Naive thymus-derived CD4-positive, alpha-beta T cell (primary cell): ENCODE measurements at regions of chr6 and their contacts with region 1.

Region 1: DNA sequence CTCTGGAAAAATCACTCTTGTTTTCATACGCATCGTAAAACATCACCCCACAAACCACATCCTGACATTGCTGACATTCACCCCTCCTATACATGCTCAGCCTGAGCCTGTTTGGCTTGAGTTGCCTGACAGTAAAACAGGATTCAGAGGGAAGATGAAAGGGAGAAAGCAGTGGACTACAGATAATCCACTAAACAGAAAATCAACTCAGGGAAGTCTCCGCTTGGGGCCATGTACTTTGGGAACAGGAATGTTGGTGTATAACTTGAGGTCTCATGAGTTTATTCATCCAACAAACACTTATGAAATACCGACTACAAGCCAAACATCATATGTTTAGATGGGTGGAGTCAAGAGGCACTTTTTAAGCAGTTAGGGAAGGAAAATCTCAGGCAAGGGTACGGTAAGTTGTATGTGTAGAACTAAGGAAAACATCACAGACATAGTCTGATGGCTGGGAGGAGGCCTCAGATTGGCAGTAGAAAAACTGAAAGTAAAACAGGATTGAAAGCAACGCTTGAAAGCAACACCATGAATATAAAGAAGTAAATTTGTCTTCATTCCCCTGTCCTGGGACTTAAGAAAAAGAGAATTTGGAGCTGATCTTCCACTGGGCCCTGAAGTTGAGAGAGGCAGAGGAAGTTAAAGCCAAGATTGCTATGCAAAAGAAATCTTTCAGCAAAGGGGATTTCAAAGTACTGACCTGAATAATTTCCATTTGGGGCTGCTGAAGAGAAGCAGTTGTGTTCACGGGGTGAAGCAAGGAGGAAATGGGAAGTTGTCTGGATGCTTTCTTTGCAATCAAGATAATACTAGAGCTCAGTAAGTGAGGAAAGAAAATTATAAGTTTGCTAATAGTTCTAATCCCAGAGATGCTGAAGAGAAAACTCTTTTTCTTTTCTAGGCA is 28.8 kb downstream of the PDE7B start:
- DNase-seq: peak in 8 of 9 donors; percentile 52 to 86 (median 79)
- ATAC-seq: peak; percentile 95
- H3K4me3 ChIP-seq: peak overlapping the region; percentile 40
- H3K4me3 Mint-ChIP-seq: peak overlapping the region; percentile 81 to 94 (median 86)
- H3K27ac ChIP-seq: peak overlapping the region; percentile 90
- H3K27ac Mint-ChIP-seq: peak overlapping the region; percentile 94 to 99 (median 98)
- H3K4me1 ChIP-seq: peaks cover 16 to 37% of the 10 kb centered on the region in 2 donors
- H3K4me1 Mint-ChIP-seq: peaks cover 31 to 90% (median 79%) of the 10 kb centered on the region in 7 donors
- H3K27me3 ChIP-seq: no peaks in the 10 kb centered on the region
- H3K27me3 Mint-ChIP-seq: no peaks in the 10 kb centered on the region

Region 2: GRCh38 chr6:135624402-135625295 is 255.7 kb before region 1 on chr6:
- CTCF ChIA-PET with region 1: no interaction called
- POLR2A ChIA-PET with region 1: no interaction called
- intact Hi-C with region 1: loop called in 1 of 2 experiments (anchors 1 kb)
- DNase-seq: peak in 3 of 9 donors; percentile 1 to 9 (median 7)
- ATAC-seq: no peak
- H3K4me3 ChIP-seq: no peak overlapping the region
- H3K4me3 Mint-ChIP-seq: peak overlapping the region in 2 of 10 donors; percentile 2 to 17
- H3K27ac ChIP-seq: no peak overlapping the region
- H3K27ac Mint-ChIP-seq: peak overlapping the region in 3 of 9 donors; percentile 13 to 91 (median 47)
- H3K4me1 ChIP-seq: no peaks in the 10 kb centered on the region
- H3K4me1 Mint-ChIP-seq: peaks cover 5 to 51% (median 16%) of the 10 kb centered on the region in 7 donors
- H3K27me3 ChIP-seq: no peaks in the 10 kb centered on the region
- H3K27me3 Mint-ChIP-seq: no peaks in the 10 kb centered on the region

Region 3: DNA sequence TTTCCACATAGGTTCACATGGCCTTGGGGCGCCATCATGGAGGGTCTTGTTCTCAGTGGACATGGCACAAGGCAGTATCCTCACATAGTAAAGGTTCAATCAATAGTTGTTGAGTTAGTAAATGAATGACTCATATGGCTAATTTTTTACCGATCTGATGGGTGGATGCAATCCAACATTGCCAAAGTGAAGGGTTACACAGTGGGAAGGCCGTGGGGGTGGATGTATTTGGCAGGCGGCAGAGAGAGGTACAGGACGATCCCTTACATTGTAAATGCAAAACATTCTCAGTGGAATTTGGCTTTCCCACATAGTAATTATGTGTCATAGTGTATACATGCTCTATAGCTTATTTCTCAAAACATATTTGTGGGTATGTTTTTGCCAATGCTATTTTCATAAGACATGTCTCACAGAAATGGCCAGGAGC is 49.9 kb before region 1 on chr6:
- CTCF ChIA-PET with region 1: no interaction called
- POLR2A ChIA-PET with region 1: interaction called, 3 read pairs
- intact Hi-C with region 1: loop called in 1 of 2 experiments (anchors 10 kb)
- DNase-seq: no peak
- ATAC-seq: no peak
- H3K4me3 ChIP-seq: no peak overlapping the region
- H3K4me3 Mint-ChIP-seq: no peak overlapping the region
- H3K27ac ChIP-seq: no peak overlapping the region
- H3K27ac Mint-ChIP-seq: no peak overlapping the region
- H3K4me1 ChIP-seq: no peaks in the 10 kb centered on the region
- H3K4me1 Mint-ChIP-seq: peaks cover 0 to 5% (median 0%) of the 10 kb centered on the region in 7 donors
- H3K27me3 ChIP-seq: no peaks in the 10 kb centered on the region
- H3K27me3 Mint-ChIP-seq: peaks cover 0 to 8% (median 3%) of the 10 kb centered on the region in 5 donors

Region 4: GRCh38 chr6:135851442-135852271 is 28.7 kb before region 1 on chr6 and contains the start of gene PDE7B:
- CTCF ChIA-PET with region 1: interaction called, 5 read pairs
- POLR2A ChIA-PET with region 1: interaction called, 12 read pairs
- intact Hi-C with region 1: loop called (anchors 1 kb)
- DNase-seq: peak; percentile 18 to 73 (median 46)
- ATAC-seq: peak; percentile 94
- H3K4me3 ChIP-seq: peak within 1 kb of the TSS; percentile 53
- H3K4me3 Mint-ChIP-seq: peak within 1 kb of the TSS in 9 of 10 donors; percentile 71 to 90 (median 87)
- H3K27ac ChIP-seq: peak within 1 kb of the TSS; percentile 75
- H3K27ac Mint-ChIP-seq: peak within 1 kb of the TSS in 6 of 9 donors; percentile 78 to 96 (median 88)
- H3K4me1 ChIP-seq: peaks cover 0 to 23% of the 10 kb centered on the region in 2 donors
- H3K4me1 Mint-ChIP-seq: peaks cover 5 to 47% (median 36%) of the 10 kb centered on the region in 7 donors
- H3K27me3 ChIP-seq: no peaks in the 10 kb centered on the region
- H3K27me3 Mint-ChIP-seq: no peaks in the 10 kb centered on the region
- total RNA-seq, gene PDE7B: 0.37 to 18.7 (median 1.7) TPM

Region 5: GRCh38 chr6:135861189-135861588 is 19.1 kb before region 1 on chr6:
- CTCF ChIA-PET with region 1: no interaction called
- POLR2A ChIA-PET with region 1: interaction called, 4 read pairs
- intact Hi-C with region 1: loop called in 1 of 2 experiments (anchors 1 kb)
- DNase-seq: no peak
- ATAC-seq: no peak
- H3K4me3 ChIP-seq: no peak overlapping the region
- H3K4me3 Mint-ChIP-seq: no peak overlapping the region
- H3K27ac ChIP-seq: no peak overlapping the region
- H3K27ac Mint-ChIP-seq: no peak overlapping the region
- H3K4me1 ChIP-seq: no peaks in the 10 kb centered on the region
- H3K4me1 Mint-ChIP-seq: peaks cover 0 to 22% (median 3%) of the 10 kb centered on the region in 7 donors
- H3K27me3 ChIP-seq: no peaks in the 10 kb centered on the region
- H3K27me3 Mint-ChIP-seq: no peaks in the 10 kb centered on the region

Region 6: GRCh38 chr6:135901774-135902524 is 21.6 kb after region 1 on chr6:
- CTCF ChIA-PET with region 1: interaction called, 5 read pairs
- POLR2A ChIA-PET with region 1: interaction called, 8 read pairs
- intact Hi-C with region 1: loop called (anchors 1 to 2 kb)
- DNase-seq: peak in 7 of 9 donors; percentile 43 to 72 (median 53)
- ATAC-seq: peak; percentile 56
- H3K4me3 ChIP-seq: no peak overlapping the region
- H3K4me3 Mint-ChIP-seq: peak overlapping the region in 7 of 10 donors; percentile 12 to 65 (median 41)
- H3K27ac ChIP-seq: no peak overlapping the region
- H3K27ac Mint-ChIP-seq: peak overlapping the region in 6 of 9 donors; percentile 1 to 78 (median 52)
- H3K4me1 ChIP-seq: peaks cover 0 to 12% of the 10 kb centered on the region in 2 donors
- H3K4me1 Mint-ChIP-seq: peaks cover 0 to 40% (median 31%) of the 10 kb centered on the region in 7 donors
- H3K27me3 ChIP-seq: no peaks in the 10 kb centered on the region
- H3K27me3 Mint-ChIP-seq: no peaks in the 10 kb centered on the region